ENCODE measurements at regions of chr4 and their contacts with region 1.

Region 1: GRCh38 chr4:34826660-34827059 is 1417.7 kb downstream of the ARAP2 start:
- DNase-seq: no peak
- H3K4me3 ChIP-seq: no peak overlapping the region
- H3K27ac ChIP-seq: no peak overlapping the region
- H3K4me1 ChIP-seq: no peaks in the 10 kb centered on the region
- H3K27me3 ChIP-seq: no peaks in the 10 kb centered on the region
- CTCF ChIP-seq: no peak
- EP300 ChIP-seq: no peak
- POLR2A ChIP-seq: no peak

Region 2: DNA sequence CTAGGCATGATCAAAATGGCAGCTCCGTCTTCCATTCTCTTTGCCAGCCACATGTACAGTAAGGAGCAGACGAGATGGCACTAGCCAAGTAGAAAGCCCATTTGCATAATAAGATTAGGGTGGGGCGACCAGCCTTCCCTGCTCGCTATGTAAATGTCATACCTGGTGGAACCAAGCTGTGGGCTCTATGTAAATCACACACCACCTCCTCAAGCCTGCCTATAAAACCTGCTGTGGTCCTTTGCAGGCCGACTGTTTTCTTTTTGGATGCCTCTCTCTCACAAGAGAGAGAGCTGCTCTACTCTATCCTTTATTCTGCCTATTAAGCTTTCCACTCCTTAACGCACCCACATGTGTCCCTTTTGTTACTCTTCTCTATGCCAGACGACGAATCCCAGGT is 55.0 kb before region 1 on chr4:
- intact Hi-C with region 1: loop called in 1 of 4 experiments (anchors 5 kb)
- DNase-seq: no peak
- H3K4me3 ChIP-seq: no peak overlapping the region
- H3K27ac ChIP-seq: no peak overlapping the region
- H3K4me1 ChIP-seq: no peaks in the 10 kb centered on the region
- H3K27me3 ChIP-seq: no peaks in the 10 kb centered on the region
- CTCF ChIP-seq: no peak
- EP300 ChIP-seq: no peak
- POLR2A ChIP-seq: no peak

Region 3: DNA sequence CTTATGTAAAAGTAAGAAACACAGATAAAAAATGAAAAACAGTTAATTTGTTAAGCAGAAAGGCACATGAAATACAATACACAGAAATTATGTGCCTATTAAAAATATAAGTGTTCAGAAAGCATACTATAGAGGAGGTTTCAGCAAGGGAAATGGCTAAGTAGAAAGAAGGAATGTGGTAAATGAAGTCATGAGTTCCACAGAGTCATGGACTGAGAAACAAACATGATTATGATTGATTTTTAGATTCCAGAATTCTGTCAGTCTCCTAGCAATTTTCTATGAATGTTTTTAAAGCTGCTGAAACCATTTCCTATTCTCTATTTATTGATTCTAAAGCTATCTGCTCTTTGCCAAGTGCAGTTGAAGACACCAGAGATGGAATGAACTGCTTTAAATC is 19.3 kb after region 1 on chr4:
- intact Hi-C with region 1: no loop called
- DNase-seq: no peak
- H3K4me3 ChIP-seq: no peak overlapping the region
- H3K27ac ChIP-seq: no peak overlapping the region
- H3K4me1 ChIP-seq: no peaks in the 10 kb centered on the region
- H3K27me3 ChIP-seq: no peaks in the 10 kb centered on the region
- CTCF ChIP-seq: no peak
- EP300 ChIP-seq: no peak
- POLR2A ChIP-seq: no peak

Measured in ovary (tissue), 10 donors.